ENCODE measurements at regions of chr1 and their contacts with region 1.

Region 1: GRCh38 chr1:42924082-42924850 is 34.4 kb downstream of the SLC2A1 start:
- DNase-seq: peak; percentile 89 to 93 (median 91)
- H3K4me3 ChIP-seq: peak overlapping the region; percentile 35 to 92 (median 81)
- H3K27ac ChIP-seq: peak overlapping the region; percentile 46 to 85
- H3K4me1 ChIP-seq: peaks cover 4 to 21% (median 14%) of the 10 kb centered on the region in 4 experiments
- H3K27me3 ChIP-seq: no peaks in the 10 kb centered on the region

Region 2: DNA sequence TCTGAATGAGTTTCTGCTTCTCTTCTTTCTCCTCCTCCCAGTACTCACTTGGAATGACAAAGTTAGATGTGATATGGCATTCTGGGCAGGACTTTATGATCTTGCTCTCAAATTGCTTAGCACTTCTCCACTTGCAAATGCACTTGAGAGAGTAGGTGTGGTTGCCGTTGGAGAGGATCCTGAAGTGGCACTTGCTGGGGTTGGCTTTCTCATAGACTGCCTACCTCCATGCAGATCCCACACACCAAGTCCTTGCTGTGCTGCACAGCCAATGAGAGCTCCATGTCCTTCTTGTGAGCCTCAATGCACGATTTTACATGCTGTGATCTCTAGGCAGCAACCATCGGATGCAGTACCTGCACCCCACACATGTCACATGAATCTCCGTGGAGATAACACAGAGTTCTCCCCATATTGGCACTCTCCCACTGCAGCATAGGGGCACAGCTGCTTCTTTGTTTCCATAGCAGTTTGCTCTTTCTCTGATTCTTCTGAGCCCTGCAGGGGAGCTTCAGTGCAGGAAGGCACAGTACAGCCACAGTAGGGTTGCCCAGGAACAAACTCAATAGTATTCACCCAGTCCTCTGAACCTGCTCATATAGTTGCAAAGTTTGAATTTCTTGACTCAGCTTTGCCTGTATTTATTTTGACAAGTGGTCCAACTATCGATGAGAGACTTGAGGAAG is 32.7 kb before region 1 on chr1:
- CTCF ChIA-PET with region 1: no interaction called
- POLR2A ChIA-PET with region 1: no interaction called
- DNase-seq: no peak
- H3K4me3 ChIP-seq: no peak overlapping the region
- H3K27ac ChIP-seq: no peak overlapping the region
- H3K4me1 ChIP-seq: no peaks in the 10 kb centered on the region
- H3K27me3 ChIP-seq: no peaks in the 10 kb centered on the region

Region 3: DNA sequence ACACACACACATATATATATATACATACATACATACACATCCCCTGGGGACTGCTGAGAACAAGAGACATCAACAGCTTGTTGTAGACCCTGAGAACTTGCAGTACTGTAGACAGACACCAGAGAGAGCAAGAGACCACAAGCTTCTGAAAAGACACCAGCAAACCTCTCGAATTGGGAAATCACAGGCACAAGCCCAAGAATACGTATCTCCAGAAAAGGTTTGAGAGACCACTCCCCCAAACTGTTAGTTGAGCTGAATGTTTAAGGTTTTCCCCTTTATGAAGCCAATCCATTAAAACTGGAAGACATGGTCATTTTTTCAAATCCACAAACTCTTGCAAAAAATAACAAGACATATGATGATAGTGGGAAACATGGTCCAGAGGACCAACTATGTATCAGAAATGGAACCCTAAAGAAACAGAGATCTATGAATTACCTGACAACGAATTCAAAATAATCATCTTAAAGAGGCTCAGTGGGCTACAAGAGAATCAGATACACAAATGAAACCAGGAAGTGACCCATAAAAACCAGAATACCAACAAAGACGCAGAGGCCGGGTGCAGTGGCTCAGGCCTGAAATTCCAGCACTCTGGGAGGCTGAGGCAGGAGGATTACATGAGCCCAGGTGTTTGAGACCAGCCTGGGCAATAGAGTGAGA is 10.7 kb before region 1 on chr1:
- CTCF ChIA-PET with region 1: interaction called, 11 read pairs
- POLR2A ChIA-PET with region 1: no interaction called
- DNase-seq: peak; percentile 85 to 92 (median 85)
- H3K4me3 ChIP-seq: no peak overlapping the region
- H3K27ac ChIP-seq: no peak overlapping the region
- H3K4me1 ChIP-seq: peaks cover 0 to 12% (median 4%) of the 10 kb centered on the region in 4 experiments
- H3K27me3 ChIP-seq: no peaks in the 10 kb centered on the region

Region 4: DNA sequence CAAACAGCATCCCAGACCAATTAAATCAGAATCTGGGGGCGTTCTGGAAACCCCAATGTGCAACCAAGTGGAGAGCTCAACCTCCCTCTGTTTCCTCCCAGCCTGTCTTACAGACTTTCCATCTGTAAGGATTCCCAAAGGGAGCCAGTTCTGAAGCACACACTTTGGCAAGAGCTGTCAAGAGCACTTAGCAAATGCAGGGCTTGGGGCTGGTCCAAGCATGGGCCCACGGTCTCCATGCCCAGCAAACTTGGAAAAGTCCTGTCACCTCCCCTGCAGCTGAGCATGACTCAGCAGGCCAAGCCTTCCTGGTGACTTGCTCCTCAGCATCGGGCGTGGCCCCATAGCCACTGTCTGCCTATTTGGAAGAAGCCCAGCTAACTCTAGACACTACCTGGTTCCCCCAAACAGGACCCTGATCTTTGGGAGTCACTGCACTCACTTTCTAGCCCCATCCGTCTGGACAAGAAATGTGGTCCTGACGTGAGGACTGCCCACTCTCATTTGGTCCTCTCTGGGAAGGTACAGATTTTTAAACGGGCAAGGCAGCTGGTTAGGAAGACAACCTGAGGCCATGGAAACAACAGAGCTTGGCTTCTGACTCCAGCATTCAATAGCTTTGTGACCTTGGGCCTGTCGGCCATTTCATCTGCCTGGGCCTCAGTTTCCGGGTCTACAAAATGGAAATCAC is 17.5 kb after region 1 on chr1:
- CTCF ChIA-PET with region 1: interaction called, 10 read pairs
- POLR2A ChIA-PET with region 1: interaction called, 3 read pairs
- DNase-seq: peak in 2 of 3 donors; percentile 55 to 63
- H3K4me3 ChIP-seq: no peak overlapping the region
- H3K27ac ChIP-seq: no peak overlapping the region
- H3K4me1 ChIP-seq: peaks cover 4 to 86% (median 78%) of the 10 kb centered on the region in 4 experiments
- H3K27me3 ChIP-seq: no peaks in the 10 kb centered on the region

Region 5: DNA sequence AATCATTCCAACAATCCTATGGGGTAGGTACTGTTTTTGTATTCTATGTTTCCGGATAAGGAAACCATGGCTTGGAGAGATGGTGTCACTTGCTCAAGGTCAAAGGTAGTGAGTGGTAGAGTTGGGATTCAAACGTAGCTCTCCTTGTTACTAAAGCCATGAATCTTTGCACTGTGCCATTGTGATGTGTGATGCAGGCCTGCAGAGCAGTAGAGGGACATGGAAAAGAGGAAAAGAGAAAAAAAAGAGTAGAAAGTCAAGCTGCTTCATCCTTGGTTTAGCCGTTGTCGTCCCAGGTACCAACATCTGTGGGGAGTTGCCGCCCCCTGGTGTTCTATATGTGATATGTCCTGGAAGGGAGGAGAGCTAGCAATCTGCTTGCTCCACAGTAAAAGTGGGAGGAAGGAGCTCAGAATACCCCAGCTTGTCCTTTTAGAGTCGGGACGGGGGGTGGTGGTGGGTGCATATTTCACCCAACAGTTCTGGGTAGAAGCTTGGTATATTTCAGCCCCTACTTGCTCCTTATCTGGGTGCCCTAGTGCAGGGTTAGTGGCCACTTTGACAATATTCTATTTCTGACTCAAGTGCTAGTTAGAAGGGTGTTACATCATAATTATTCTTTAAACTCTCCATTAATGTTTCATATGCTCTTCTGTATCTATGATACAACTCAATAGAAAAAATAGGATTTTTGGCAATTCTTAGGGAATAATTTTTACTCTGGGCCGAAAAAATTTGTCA is 149.4 kb after region 1 on chr1:
- CTCF ChIA-PET with region 1: interaction called, 406 read pairs
- POLR2A ChIA-PET with region 1: no interaction called
- DNase-seq: peak; percentile 63 to 81 (median 74)
- H3K4me3 ChIP-seq: no peak overlapping the region
- H3K27ac ChIP-seq: no peak overlapping the region
- H3K4me1 ChIP-seq: peaks cover 0 to 6% (median 5%) of the 10 kb centered on the region in 4 experiments
- H3K27me3 ChIP-seq: no peaks in the 10 kb centered on the region